ENCODE measurements at regions of chr1 and their contacts with region 1.

Region 1: DNA sequence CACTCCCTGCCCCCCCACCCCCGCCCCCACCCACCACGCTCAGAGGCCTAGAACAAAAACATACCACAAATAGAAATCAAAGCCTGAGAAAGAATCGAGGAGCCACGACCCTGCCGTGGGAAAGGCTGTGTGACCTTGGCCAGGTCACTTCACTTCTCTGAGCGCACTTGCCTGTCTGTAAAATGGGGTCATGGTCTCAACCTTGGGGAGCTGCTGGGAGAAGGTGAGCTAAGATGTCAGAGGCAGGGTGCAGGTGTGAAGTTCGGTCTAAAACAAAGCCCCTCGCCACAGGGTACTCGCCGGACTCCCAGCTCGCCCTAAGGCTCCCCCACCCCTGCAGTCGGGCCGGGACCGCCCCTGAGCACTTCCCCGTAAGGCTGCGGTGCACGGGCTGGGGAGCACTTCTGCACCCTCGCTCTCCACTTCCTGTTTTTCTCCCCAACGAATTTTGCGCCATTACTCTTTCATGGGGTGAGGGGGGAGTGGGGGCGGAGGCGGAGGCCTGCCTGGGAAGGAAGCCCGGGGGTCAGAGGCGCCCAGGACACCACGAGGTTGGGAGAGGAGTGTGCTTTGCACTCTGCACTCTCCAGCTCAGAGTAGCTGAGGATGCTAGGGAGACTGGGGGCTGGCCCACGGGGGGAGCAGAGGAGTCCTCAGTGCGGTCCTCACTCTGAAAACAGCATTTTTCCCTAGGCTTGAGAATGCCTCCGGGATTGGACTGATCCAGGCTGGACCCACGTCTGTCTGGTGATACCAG is 21.9 kb upstream of the PIK3CD start:
- DNase-seq: peak; percentile 91
- ATAC-seq: peak; percentile 59
- H3K4me3 Mint-ChIP-seq: peak overlapping the region; percentile 98
- H3K27ac Mint-ChIP-seq: peak overlapping the region; percentile 96
- H3K4me1 Mint-ChIP-seq: peaks cover 46% of the 10 kb centered on the region
- H3K27me3 Mint-ChIP-seq: no peaks in the 10 kb centered on the region
- CTCF ChIP-seq: no peak

Region 2: DNA sequence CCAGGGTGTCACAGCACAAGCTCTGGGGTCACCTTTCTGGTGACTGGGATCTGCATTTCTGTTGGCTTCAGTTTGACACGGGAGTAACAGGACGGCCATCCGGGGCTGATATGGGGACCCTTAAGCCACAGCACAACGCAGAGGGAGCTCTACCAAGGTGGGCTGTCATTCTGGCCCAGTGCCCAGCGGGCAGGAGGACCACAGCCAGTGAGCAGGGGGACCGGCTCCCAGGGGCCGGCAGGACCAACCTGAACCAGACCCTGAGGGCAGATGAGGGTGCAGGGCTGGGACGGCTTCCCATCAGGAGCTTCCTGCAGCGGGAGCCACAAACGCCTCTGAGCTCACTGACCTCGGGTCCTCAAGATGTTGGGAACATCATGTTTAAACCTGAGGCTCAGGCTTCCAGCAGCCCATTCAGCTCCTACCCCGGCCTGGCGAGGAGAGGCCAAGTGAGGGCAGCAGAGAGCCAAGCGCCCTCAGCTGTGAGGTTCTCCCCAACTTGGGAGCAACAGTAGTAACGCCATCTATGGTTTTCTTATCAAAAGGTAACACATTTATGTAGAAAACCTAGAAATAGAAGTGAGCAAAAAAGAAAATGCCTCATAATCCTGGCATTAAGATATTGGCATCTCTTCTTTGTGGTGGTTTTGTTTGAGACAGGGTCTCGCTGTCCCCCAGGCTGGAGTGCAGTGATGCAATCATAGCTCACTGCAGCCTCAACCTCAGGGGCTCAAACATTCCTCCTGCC is 14.1 kb before region 1 on chr1:
- CTCF ChIA-PET with region 1: interaction called, 11 read pairs
- POLR2A ChIA-PET with region 1: no interaction called
- intact Hi-C with region 1: no loop called
- DNase-seq: peak; percentile 71
- ATAC-seq: peak; percentile 93
- H3K4me3 Mint-ChIP-seq: no peak overlapping the region
- H3K27ac Mint-ChIP-seq: no peak overlapping the region
- H3K4me1 Mint-ChIP-seq: no peaks in the 10 kb centered on the region
- H3K27me3 Mint-ChIP-seq: peaks cover 6% of the 10 kb centered on the region
- CTCF ChIP-seq: peak; percentile 70

Region 3: GRCh38 chr1:9651565-9652378 is 22.1 kb after region 1 on chr1 and contains the start of gene PIK3CD:
- CTCF ChIA-PET with region 1: interaction called, 160 read pairs
- POLR2A ChIA-PET with region 1: interaction called, 335 read pairs
- intact Hi-C with region 1: loop called (anchors 1 kb)
- DNase-seq: peak; percentile 59
- ATAC-seq: peak; percentile 34
- H3K4me3 Mint-ChIP-seq: peak within 1 kb of the TSS; percentile 95
- H3K27ac Mint-ChIP-seq: peak within 1 kb of the TSS; percentile 96
- H3K4me1 Mint-ChIP-seq: peaks cover 61% of the 10 kb centered on the region
- H3K27me3 Mint-ChIP-seq: no peaks in the 10 kb centered on the region
- CTCF ChIP-seq: no peak
- total RNA-seq, gene PIK3CD: 152 to 158 TPM

Region 4: GRCh38 chr1:9671377-9672140 is 41.9 kb after region 1 on chr1:
- CTCF ChIA-PET with region 1: interaction called, 30 read pairs
- POLR2A ChIA-PET with region 1: interaction called, 18 read pairs
- intact Hi-C with region 1: loop called (anchors 5 kb)
- DNase-seq: peak; percentile 38
- ATAC-seq: peak; percentile 65
- H3K4me3 Mint-ChIP-seq: no peak overlapping the region
- H3K27ac Mint-ChIP-seq: peak overlapping the region; percentile 91
- H3K4me1 Mint-ChIP-seq: peaks cover 72% of the 10 kb centered on the region
- H3K27me3 Mint-ChIP-seq: no peaks in the 10 kb centered on the region
- CTCF ChIP-seq: no peak

Region 5: GRCh38 chr1:9721606-9722377 is 92.2 kb after region 1 on chr1:
- CTCF ChIA-PET with region 1: interaction called, 69 read pairs
- POLR2A ChIA-PET with region 1: interaction called, 142 read pairs
- intact Hi-C with region 1: loop called (anchors 5 kb)
- DNase-seq: peak; percentile 91
- ATAC-seq: peak; percentile 43
- H3K4me3 Mint-ChIP-seq: peak overlapping the region; percentile 49
- H3K27ac Mint-ChIP-seq: peak overlapping the region; percentile 63
- H3K4me1 Mint-ChIP-seq: peaks cover 70% of the 10 kb centered on the region
- H3K27me3 Mint-ChIP-seq: no peaks in the 10 kb centered on the region
- CTCF ChIP-seq: peak; percentile 83

Region 6: GRCh38 chr1:9867408-9868243 is 238.0 kb after region 1 on chr1:
- CTCF ChIA-PET with region 1: interaction called, 28 read pairs
- POLR2A ChIA-PET with region 1: no interaction called
- intact Hi-C with region 1: loop called (anchors 5 kb)
- DNase-seq: peak; percentile 94
- ATAC-seq: peak; percentile 99
- H3K4me3 Mint-ChIP-seq: no peak overlapping the region
- H3K27ac Mint-ChIP-seq: no peak overlapping the region
- H3K4me1 Mint-ChIP-seq: no peaks in the 10 kb centered on the region
- H3K27me3 Mint-ChIP-seq: no peaks in the 10 kb centered on the region
- CTCF ChIP-seq: peak; percentile 94

Measured in activated CD8-positive, alpha-beta T cell treated with anti-CD3 and anti-CD28 coated beads for 36 hours (primary cell).